ENCODE measurements at regions of chr17 and their contacts with region 1.

Region 1: GRCh38 chr17:48892940-48893645 is 506 bp downstream of the ATP5MC1 start:
- DNase-seq: peak in 1 of 5 donors; percentile 40
- ATAC-seq: peak in 2 of 4 donors; percentile 1 to 6
- H3K4me3 ChIP-seq: peak overlapping the region; percentile 56 to 97 (median 80)
- H3K27ac ChIP-seq: peak overlapping the region; percentile 75 to 95 (median 90)
- H3K4me1 ChIP-seq: peaks cover 0 to 34% (median 15%) of the 10 kb centered on the region in 12 donors
- H3K27me3 ChIP-seq: no peaks in the 10 kb centered on the region
- CTCF ChIP-seq: no peak
- POLR2A ChIP-seq: peak in 1 of 2 donors; percentile 27

Region 2: DNA sequence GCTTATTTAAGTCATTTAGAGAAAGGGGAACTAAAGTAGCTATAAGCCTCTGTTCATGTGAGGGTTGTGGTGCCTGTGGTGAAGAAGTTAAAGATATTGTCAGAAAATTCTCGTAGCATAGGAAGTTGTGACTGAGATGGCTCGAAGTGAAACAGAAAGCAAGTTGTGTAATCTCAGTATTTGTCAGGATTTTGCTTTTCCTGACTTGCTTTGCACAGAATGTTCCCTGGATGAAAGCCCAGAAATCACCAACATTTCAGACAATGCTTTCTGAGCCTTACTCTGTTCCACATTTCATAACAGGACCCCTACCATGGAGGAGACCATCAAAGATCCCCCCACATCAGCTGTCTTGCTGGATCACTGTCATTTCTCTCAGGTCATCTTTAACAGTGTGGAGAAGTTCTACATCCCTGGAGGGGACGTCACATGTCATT is 51.7 kb before region 1 on chr17:
- intact Hi-C with region 1: no loop called
- DNase-seq: peak in 2 of 5 donors; percentile 23 to 55
- ATAC-seq: peak; percentile 64 to 86 (median 75)
- H3K4me3 ChIP-seq: peak overlapping the region in 11 of 12 donors; percentile 2 to 52 (median 38)
- H3K27ac ChIP-seq: peak overlapping the region; percentile 86 to 95 (median 90)
- H3K4me1 ChIP-seq: peaks cover 18 to 87% (median 59%) of the 10 kb centered on the region in 12 donors
- H3K27me3 ChIP-seq: no peaks in the 10 kb centered on the region
- CTCF ChIP-seq: no peak
- POLR2A ChIP-seq: peak in 1 of 2 donors; percentile 57

Region 3: DNA sequence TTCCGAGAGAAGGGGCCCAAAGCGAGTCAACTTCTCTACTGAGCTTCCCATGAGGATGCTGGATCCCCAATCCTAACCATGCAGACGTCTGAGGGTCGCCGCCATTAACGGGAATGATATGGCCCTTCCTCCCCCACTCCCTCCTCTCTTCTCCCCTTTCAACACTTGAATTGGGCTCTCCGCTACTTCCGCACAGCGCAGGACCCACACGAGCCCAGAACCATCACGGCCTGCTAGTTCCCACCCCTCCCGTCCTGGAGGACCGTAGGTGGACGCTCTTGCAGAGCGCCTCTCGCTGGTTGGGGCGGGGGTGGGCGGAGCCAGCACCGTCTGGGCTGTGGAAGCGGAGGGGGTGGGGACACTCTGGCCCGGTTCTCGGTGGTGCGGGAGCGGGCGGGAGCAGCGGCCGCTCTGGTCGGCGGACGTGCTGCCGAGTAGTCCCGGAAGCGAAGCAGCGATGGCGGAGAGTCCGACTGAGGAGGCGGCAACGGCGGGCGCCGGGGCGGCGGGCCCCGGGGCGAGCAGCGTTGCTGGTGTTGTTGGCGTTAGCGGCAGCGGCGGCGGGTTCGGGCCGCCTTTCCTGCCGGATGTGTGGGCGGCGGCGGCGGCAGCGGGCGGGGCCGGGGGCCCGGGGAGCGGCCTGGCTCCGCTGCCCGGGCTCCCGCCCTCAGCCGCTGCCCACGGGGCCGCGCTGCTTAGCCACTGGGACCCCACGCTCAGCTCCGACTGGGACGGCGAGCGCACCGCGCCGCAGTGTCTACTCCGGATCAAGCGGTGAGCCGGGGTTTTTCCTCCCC is 15.2 kb after region 1 on chr17 and contains the start of gene UBE2Z:
- intact Hi-C with region 1: loop called in 5 of 10 experiments (anchors 1 to 2 kb)
- DNase-seq: peak; percentile 95 to 96 (median 95)
- ATAC-seq: peak; percentile 98 to 99 (median 98)
- H3K4me3 ChIP-seq: peak within 1 kb of the TSS; percentile 57 to 99 (median 87)
- H3K27ac ChIP-seq: peak within 1 kb of the TSS; percentile 52 to 98 (median 94)
- H3K4me1 ChIP-seq: peaks cover 0 to 44% (median 27%) of the 10 kb centered on the region in 12 donors
- H3K27me3 ChIP-seq: no peaks in the 10 kb centered on the region
- CTCF ChIP-seq: peak in 5 of 12 donors; percentile 14 to 63 (median 49)
- POLR2A ChIP-seq: peak in 1 of 2 donors; percentile 88
- total RNA-seq, gene UBE2Z: 31.1 to 59.0 (median 41.0) TPM